Gastrocnemius medialis (tissue), 4 donors: ENCODE measurements at regions of chr2 and their contacts with region 1.

Region 1: DNA sequence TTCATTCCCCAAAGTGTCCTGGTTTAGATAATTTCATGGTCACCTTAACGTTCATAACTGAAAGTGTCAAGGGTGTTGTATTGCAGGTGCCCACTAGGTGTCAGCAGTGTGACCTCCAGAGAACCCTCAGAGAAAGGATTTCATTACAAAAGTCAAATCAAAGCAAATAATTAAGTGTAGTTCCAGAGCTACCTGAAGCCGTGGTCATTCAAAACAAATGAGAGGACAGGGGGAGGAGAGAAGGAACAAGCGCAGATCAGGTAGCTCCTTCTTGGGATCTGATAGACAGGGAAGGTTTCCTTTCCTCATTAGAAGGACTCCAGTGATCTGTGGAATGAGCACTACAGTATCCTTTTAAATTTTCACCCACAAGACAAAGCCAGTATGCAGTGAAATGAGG is at the start of gene SLC9A4:
- DNase-seq: peak in 1 of 2 donors; percentile 22
- ATAC-seq: peak in 1 of 2 donors; percentile 56
- H3K4me3 ChIP-seq: no peak within 1 kb of the TSS
- H3K27ac ChIP-seq: no peak within 1 kb of the TSS
- H3K4me1 ChIP-seq: no peaks in the 10 kb centered on the region
- H3K27me3 ChIP-seq: no peaks in the 10 kb centered on the region
- CTCF ChIP-seq: peak; percentile 71 to 89 (median 76)
- POLR2A ChIP-seq: no peak
- total RNA-seq, gene SLC9A4: not detected

Region 2: DNA sequence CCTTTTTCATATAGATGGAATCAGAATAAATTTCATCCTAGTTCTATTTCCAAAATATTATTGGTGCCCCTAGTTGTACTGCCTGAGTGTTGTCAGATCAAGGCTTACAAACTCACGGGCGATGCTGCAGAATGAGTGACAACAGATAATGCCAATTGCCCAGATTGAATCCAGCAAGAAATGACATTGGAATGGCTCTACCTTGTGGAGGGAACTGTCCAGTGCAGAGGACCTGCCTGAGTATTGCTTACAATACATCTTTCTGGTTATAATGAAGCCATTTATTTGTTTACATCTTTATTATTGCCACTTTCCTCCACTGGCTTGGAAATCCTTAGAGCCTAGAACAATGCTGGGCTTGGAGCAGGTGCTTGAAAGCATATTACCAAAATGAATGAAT is 489.1 kb before region 1 on chr2:
- in situ Hi-C with region 1: loop called in 1 of 4 experiments (anchors 25 kb)
- intact Hi-C with region 1: no loop called
- DNase-seq: no peak
- ATAC-seq: peak in 1 of 2 donors; percentile 51
- H3K4me3 ChIP-seq: no peak overlapping the region
- H3K27ac ChIP-seq: no peak overlapping the region
- H3K4me1 ChIP-seq: no peaks in the 10 kb centered on the region
- H3K27me3 ChIP-seq: no peaks in the 10 kb centered on the region
- CTCF ChIP-seq: peak in 2 of 5 experiments; percentile 5 to 25
- POLR2A ChIP-seq: no peak

Region 3: DNA sequence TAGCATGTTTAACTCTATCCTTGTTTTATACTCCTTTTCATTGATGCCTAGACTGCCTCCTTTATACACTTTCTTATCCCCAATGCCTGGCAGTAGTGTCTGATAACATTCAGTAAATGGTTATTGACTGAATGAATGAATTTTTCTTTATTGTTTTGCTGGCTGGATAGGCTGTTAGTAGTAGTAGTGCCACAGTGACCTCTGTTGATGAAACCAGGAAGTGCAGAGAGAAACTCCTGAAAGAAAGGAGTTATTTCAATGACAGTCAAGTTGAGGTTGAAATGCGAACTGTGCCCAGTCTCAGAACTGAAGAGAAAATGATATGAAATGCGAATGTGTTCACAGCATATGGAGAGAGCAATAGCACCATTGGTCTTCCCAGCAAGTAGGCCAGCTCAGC is 119.6 kb after region 1 on chr2:
- in situ Hi-C with region 1: no loop called
- intact Hi-C with region 1: loop called (anchors 2 kb)
- DNase-seq: no peak
- ATAC-seq: no peak
- H3K4me3 ChIP-seq: no peak overlapping the region
- H3K27ac ChIP-seq: no peak overlapping the region
- H3K4me1 ChIP-seq: peaks cover 0 to 9% of the 10 kb centered on the region in 2 donors
- H3K27me3 ChIP-seq: no peaks in the 10 kb centered on the region
- CTCF ChIP-seq: peak in 1 of 5 experiments; percentile 19
- POLR2A ChIP-seq: no peak

Region 4: DNA sequence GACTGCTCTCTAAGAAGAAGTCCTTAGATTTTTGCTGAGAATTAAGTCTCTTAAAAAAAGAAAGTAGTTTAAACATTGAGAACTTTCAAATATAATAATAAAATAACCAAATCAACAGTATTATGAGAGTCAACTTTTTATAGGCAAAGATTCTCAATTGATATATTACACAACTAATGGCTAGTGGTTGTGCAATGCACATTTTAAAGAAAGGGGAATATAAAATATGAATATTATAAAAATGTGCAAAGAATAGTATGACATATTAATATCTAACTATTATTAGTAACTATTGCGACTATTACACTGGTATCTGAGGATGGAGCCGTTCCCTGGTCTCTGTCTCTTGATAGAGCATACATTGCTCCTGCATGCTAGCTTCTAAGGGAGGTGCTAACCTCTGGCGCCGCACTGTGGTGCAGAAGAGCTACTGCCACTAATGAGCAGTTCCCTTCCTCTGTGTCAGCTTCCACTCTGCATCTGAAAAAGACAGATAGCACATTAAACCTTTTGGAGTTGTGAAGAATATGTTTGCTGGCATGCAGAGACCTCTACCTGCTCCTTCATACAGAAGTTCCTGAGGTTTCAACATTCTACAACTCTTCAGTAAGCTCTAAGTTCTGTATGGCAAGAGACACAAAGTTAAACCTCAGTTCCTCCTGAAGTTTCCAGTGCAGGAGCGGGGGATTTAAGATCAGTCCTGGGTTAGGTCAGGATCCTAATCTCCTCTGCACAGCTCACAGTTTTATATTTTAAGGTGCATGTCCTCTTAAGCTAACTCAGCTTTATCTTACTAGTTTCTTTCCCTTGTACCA is 142.8 kb after region 1 on chr2:
- in situ Hi-C with region 1: loop called in 2 of 4 experiments (anchors 5 to 10 kb)
- intact Hi-C with region 1: loop called (anchors 2 kb)
- DNase-seq: peak; percentile 31 to 51
- ATAC-seq: peak; percentile 53 to 61
- H3K4me3 ChIP-seq: no peak overlapping the region
- H3K27ac ChIP-seq: no peak overlapping the region
- H3K4me1 ChIP-seq: peaks cover 10 to 16% of the 10 kb centered on the region in 2 donors
- H3K27me3 ChIP-seq: no peaks in the 10 kb centered on the region
- CTCF ChIP-seq: peak; percentile 62 to 89 (median 79)
- POLR2A ChIP-seq: no peak

Region 5: DNA sequence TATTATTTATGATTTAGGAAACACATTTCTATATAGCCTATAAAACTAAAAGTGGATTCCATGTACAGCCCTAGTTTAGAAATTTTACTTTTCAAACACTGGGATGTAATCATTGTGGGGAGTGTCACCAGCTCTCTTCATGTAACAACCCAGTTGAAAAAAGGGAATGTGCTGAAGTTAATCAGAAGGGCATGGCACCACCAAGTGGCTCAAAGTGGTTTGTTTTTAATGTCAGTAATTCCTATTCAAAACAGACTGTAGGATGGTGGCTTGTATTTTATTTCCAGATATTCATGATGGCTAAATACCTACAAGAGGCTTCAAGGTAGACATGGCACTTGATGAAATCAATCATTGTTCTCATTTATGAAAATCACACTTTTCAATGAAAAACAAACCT is 230.7 kb after region 1 on chr2:
- in situ Hi-C with region 1: loop called in 1 of 4 experiments (anchors 10 kb)
- intact Hi-C with region 1: loop called (anchors 5 kb)
- DNase-seq: no peak
- ATAC-seq: peak; percentile 58 to 66
- H3K4me3 ChIP-seq: no peak overlapping the region
- H3K27ac ChIP-seq: no peak overlapping the region
- H3K4me1 ChIP-seq: peaks cover 0 to 3% of the 10 kb centered on the region in 2 donors
- H3K27me3 ChIP-seq: no peaks in the 10 kb centered on the region
- CTCF ChIP-seq: peak in 4 of 5 experiments; percentile 29 to 46 (median 36)
- POLR2A ChIP-seq: no peak